ENCODE measurements at regions of chr17 and their contacts with region 1.

Region 1: GRCh38 chr17:6427279-6427781 is 7.6 kb downstream of the AIPL1 start:
- DNase-seq: no peak
- H3K4me3 ChIP-seq: no peak overlapping the region
- H3K27ac ChIP-seq: no peak overlapping the region
- H3K4me1 ChIP-seq: no peaks in the 10 kb centered on the region
- H3K27me3 ChIP-seq: no peaks in the 10 kb centered on the region
- CTCF ChIP-seq: no peak
- POLR2A ChIP-seq: no peak

Region 2: DNA sequence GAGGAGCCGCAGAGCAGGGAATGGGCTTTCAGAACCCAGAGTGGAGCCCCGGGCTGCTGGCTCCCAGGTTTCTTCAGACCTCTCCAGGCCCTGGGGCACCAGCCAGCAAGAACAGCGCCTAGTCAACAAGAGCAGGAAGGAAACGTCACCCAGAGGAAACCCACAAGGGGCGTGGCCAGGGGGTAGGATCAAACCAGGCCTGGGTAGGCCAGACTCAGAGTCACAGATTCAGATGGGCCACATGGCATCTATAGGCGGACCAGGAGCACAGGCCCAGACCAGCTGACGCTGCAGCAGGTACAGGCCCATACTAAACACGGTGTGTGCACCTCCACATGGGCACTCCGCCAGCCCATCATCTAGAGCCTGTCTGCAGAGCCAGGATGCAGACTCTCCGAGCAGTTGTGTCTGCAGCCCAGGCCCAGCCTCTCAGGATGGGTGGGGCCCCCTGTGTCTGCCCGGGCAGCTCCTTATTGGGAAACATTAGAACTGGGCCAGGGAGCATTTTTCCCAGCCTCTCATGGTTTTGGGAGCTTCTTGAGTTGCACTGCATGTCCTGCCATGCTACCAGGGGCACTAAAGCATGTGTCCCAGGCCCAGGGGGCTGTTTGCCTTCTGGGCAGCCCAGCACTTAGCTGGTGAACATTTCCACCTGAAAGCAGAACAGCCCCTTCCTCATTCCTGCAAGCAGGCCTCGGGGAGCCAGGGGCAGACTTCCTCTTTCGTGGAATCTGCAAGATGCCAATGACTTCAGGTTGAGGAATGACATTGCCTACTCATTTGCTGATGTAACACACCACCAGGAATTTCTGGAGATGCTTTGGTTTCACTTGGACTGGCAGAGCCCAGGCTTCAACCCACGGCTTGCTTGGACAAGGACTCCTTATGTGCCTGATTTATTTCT is 842.7 kb before region 1 on chr17 and contains the start of gene NLRP1:
- intact Hi-C with region 1: loop called (anchors 5 kb)
- DNase-seq: peak; percentile 82 to 89
- H3K4me3 ChIP-seq: peak within 1 kb of the TSS; percentile 36 to 41
- H3K27ac ChIP-seq: peak within 1 kb of the TSS; percentile 87 to 88
- H3K4me1 ChIP-seq: peaks cover 0 to 17% of the 10 kb centered on the region in 2 donors
- H3K27me3 ChIP-seq: no peaks in the 10 kb centered on the region
- CTCF ChIP-seq: no peak
- POLR2A ChIP-seq: peak in 1 of 2 donors; percentile 81
- total RNA-seq, gene NLRP1: 13.8 to 78.3 (median 47.0) TPM

Region 3: GRCh38 chr17:6603744-6604325 is 176.5 kb after region 1 on chr17:
- intact Hi-C with region 1: no loop called
- DNase-seq: no peak
- H3K4me3 ChIP-seq: no peak overlapping the region
- H3K27ac ChIP-seq: no peak overlapping the region
- H3K4me1 ChIP-seq: no peaks in the 10 kb centered on the region
- H3K27me3 ChIP-seq: no peaks in the 10 kb centered on the region
- CTCF ChIP-seq: no peak
- POLR2A ChIP-seq: no peak

Measured in uterus (tissue), 4 donors.